ENCODE measurements at regions of chr5 and their contacts with region 1.

Region 1: GRCh38 chr5:72611118-72611730 is 104.0 kb upstream of the ZNF366 start:
- DNase-seq: no peak
- H3K4me3 ChIP-seq: no peak overlapping the region
- H3K27me3 ChIP-seq: no peaks in the 10 kb centered on the region
- CTCF ChIP-seq: peak; percentile 100

Region 2: GRCh38 chr5:72036951-72037350 is 574.3 kb before region 1 on chr5:
- CTCF ChIA-PET with region 1: no interaction called
- POLR2A ChIA-PET with region 1: no interaction called
- DNase-seq: no peak
- H3K4me3 ChIP-seq: no peak overlapping the region
- H3K27me3 ChIP-seq: no peaks in the 10 kb centered on the region
- CTCF ChIP-seq: no peak

Region 3: GRCh38 chr5:72346396-72346795 is 264.8 kb before region 1 on chr5:
- CTCF ChIA-PET with region 1: no interaction called
- POLR2A ChIA-PET with region 1: no interaction called
- DNase-seq: no peak
- H3K4me3 ChIP-seq: no peak overlapping the region
- H3K27me3 ChIP-seq: no peaks in the 10 kb centered on the region
- CTCF ChIP-seq: no peak

Region 4: DNA sequence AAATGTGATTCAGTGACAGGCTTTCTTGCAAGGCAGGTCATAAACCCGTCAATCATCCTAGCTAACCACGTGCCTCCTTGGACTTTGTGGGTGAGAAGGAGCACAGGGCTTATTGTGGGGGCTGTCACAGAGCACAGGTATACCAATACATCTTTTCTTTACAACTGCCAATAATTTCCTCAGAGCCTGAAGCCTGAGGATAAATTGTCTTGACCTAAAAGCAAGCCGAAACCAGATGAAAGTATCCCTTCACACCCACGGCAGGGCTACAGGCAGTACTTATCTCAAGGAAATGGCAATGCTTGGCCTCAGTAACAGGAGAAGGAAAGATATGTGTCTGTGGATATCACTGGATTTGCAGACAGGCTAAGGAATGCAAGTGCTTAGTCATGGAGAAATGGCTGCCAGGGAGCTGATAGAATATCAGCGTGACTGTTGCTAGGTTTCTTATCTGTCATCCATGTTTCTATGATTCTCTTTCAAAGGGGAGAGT is 13.7 kb before region 1 on chr5:
- CTCF ChIA-PET with region 1: interaction called, 24 read pairs
- POLR2A ChIA-PET with region 1: no interaction called
- DNase-seq: no peak
- H3K4me3 ChIP-seq: no peak overlapping the region
- H3K27me3 ChIP-seq: no peaks in the 10 kb centered on the region
- CTCF ChIP-seq: no peak

Region 5: DNA sequence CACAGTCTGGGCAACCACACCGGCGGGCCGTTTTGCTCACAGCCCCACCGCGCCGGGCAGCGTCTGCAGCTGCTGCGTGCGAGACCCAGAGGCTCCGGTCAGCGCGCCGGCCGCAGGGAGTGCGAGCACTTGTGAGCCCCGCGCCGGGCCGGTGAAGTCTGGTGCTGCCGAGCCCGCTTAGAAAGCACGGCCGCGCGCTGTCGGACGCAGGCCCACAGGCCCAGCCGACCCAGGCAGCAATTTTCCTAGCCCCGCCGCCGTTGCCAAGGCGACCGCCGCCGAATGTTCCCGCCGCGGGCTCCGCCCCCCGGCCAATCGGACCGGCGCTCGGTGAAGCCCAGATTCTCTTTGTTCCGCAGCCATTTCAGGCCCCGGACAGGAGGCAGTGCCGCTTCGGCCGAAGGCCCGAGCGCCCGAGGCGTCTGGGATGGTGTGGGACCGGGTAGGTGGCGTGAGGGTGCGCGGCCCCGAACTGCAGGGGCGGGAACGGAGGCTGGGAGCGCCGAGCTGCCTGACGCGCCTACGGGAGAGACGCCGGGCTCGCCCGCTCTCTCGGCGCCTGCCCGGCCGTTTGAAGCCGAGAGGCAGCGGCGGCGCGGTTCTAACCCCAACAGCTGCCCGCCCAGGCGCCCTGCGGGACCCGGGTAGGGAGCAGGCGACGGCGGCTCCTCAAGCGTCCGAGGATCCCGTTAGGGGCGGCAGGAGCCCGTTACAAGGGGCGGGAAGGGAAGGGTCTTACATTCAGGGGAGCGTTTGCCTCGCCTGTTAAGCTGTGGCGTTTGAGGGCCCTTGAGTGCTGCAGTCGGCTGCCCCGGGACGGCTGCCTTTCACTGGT is 205.3 kb after region 1 on chr5 and contains the start of gene TNPO1:
- CTCF ChIA-PET with region 1: interaction called, 53 read pairs
- POLR2A ChIA-PET with region 1: no interaction called
- DNase-seq: peak; percentile 61
- H3K4me3 ChIP-seq: peak within 1 kb of the TSS; percentile 92
- H3K27me3 ChIP-seq: no peaks in the 10 kb centered on the region
- CTCF ChIP-seq: no peak
- polyA plus RNA-seq, gene TNPO1: 49.6 and 106 TPM in 2 replicates

Measured in BJ (cell line).